ENCODE measurements at regions of chr10 and their contacts with region 1.

Region 1: DNA sequence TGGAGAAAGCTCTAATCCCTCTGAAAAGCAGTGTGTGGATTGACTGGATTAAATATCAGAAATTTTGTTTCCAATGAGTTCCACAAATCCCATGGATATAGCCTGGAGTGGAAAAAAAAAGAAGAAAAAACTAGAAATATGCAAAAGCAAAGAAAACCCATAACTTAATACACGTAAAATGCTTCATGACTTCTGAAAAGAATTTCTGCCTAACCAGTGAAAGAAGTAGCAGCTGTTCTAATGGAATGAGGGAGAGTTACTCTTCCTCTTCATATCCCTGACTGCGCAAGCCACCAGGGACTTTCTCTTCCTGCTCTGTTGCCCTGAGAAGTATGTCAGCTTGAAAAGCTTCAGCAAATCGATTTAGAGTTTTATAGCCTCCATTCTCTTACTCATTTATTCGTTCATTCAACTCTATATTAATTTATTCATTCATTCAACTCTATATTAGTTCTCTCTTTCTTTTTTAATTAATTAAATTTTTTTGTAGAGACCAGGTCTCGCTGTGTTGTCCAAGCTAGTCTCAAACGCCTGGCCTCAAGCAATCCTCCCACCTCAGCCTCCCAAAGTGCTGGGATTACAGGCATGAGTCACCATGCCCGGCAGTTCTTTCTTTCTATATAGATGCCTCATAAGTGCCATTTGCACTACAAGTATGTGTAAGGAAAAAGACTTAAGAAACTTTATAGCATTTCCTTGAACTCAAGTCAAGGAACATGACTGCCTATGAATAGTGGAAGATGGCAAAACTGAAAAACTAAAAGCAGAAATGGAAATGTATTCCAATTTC is 447.3 kb upstream of the NRP1 start:
- H3K4me3 ChIP-seq: no peak overlapping the region
- H3K27ac ChIP-seq: no peak overlapping the region
- H3K4me1 ChIP-seq: no peaks in the 10 kb centered on the region
- CTCF ChIP-seq: no peak

Region 2: GRCh38 chr10:33260403-33261149 is 521.2 kb before region 1 on chr10:
- CTCF ChIA-PET with region 1: no interaction called
- POLR2A ChIA-PET with region 1: interaction called, 12 read pairs
- H3K4me3 ChIP-seq: no peak overlapping the region
- H3K27ac ChIP-seq: no peak overlapping the region
- H3K4me1 ChIP-seq: peaks cover 14% of the 10 kb centered on the region
- CTCF ChIP-seq: no peak

Region 3: DNA sequence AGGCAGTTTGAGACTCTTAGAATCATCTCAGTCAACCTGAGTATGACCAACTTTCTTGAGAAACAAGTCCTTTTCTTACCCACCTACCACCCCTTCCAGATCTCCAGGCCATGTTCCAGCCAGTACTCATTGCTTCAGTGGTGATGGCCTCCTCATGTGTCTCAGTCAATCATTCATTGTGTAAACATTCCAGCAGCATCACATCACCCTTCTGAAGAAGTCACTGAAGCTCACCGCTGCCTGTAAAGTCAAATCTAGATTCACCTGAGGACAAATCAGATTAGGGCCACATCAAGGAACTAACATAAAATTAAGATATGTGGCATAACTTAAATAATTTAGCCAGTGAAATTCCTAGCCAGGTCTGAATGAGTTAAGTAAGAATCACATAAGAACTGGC is 19.9 kb after region 1 on chr10:
- CTCF ChIA-PET with region 1: no interaction called
- POLR2A ChIA-PET with region 1: no interaction called
- H3K4me3 ChIP-seq: no peak overlapping the region
- H3K27ac ChIP-seq: no peak overlapping the region
- H3K4me1 ChIP-seq: peaks cover 2% of the 10 kb centered on the region; the same call in 1 of the 2 replicates
- CTCF ChIP-seq: no peak

Measured in HEK293 (cell line).